HEK293 (cell line): ENCODE measurements at regions of chr7 and their contacts with region 1.

Region 1: DNA sequence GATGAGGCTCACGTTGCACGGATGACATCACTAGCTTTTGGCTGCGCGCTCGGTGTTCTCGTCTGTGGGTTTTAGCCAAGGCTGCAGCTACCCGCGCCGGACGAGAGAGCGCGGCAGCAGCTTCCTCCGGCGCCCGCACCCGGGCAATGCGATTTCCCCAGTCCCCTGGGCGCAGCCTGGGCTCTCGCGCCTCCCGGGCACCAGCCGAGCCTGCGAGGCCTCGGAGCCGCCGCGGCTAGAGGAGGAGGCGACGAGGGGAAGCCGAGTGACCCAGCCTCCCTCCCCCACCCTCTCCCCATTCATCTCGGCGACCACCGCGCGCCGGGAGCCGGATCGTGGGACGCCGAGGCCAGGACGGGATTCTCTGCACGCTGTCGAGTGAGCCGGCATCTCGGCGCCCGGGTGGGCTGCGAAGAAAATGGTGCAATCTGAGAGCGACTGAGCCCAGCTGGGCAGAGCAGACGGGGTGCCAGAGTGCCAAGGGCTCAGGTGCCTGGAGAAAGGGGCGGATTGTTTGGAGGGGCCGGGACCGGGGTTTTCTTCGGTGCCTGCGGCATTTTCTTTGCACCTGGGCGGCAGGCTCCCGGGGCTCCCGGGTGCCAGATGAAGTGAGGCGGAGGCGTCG is 1.2 kb upstream of the TMEM178B start:
- H3K4me3 ChIP-seq: peak overlapping the region; percentile 68
- H3K27ac ChIP-seq: peak overlapping the region; percentile 58; the same call in 1 of the 2 replicates
- H3K4me1 ChIP-seq: no peaks in the 10 kb centered on the region
- CTCF ChIP-seq: peak; percentile 32; the same call in 1 of the 2 replicates

Region 2: DNA sequence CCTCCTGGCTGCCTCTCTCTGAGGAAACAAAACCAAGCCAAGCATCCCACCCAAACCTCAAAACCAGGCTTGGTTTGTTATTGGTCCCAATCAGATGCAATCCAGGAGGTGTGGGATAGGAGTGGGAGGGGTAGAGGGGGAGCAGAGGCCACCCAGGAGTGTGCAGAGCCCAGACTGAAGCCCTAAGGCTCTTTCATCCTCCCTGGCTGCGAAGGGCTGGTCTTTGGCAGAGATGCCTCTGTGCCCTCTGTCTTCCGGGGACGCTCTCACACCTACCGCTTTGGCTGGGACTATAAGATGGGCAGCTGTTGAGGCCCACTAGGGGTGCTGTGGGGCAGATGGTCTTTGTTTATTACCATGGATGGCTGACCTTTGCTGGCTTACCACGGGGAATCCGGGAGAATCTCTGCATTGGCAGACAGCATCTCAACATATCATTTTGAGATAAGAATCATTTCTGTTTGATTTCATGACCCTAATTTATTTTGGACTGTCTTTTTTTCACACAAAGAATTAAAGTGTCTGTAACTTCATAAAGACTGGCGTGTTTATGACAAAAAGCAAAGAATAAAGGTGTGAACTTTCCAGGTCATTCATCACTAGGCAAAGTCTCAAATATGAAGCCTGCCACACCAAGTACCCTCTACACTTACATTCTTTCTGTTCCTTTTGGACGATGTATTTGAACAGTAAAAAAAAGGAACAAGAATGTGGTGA is 425.6 kb before region 1 on chr7:
- CTCF ChIA-PET with region 1: no interaction called
- POLR2A ChIA-PET with region 1: no interaction called
- H3K4me3 ChIP-seq: no peak overlapping the region
- H3K27ac ChIP-seq: no peak overlapping the region
- H3K4me1 ChIP-seq: no peaks in the 10 kb centered on the region
- CTCF ChIP-seq: peak; percentile 85

Region 3: GRCh38 chr7:140972876-140973859 is 99.5 kb before region 1 on chr7:
- CTCF ChIA-PET with region 1: no interaction called
- POLR2A ChIA-PET with region 1: no interaction called
- H3K4me3 ChIP-seq: no peak overlapping the region
- H3K27ac ChIP-seq: no peak overlapping the region
- H3K4me1 ChIP-seq: no peaks in the 10 kb centered on the region; the same call in 1 of the 2 replicates
- CTCF ChIP-seq: no peak

Region 4: GRCh38 chr7:141014524-141015395 is 57.9 kb before region 1 on chr7 and contains the start of gene MRPS33:
- CTCF ChIA-PET with region 1: interaction called, 8 read pairs
- POLR2A ChIA-PET with region 1: interaction called, 12 read pairs
- H3K4me3 ChIP-seq: peak within 1 kb of the TSS; percentile 89
- H3K27ac ChIP-seq: no peak within 1 kb of the TSS; the same call in 1 of the 2 replicates
- H3K4me1 ChIP-seq: no peaks in the 10 kb centered on the region; the same call in 1 of the 2 replicates
- CTCF ChIP-seq: peak; percentile 98

Region 5: GRCh38 chr7:141220263-141220880 is 147.7 kb after region 1 on chr7:
- CTCF ChIA-PET with region 1: interaction called, 10 read pairs
- POLR2A ChIA-PET with region 1: interaction called, 4 read pairs
- H3K4me3 ChIP-seq: no peak overlapping the region
- H3K27ac ChIP-seq: no peak overlapping the region
- H3K4me1 ChIP-seq: no peaks in the 10 kb centered on the region
- CTCF ChIP-seq: no peak

Region 6: GRCh38 chr7:141533149-141533949 is 460.7 kb after region 1 on chr7:
- CTCF ChIA-PET with region 1: interaction called, 13 read pairs
- POLR2A ChIA-PET with region 1: no interaction called
- H3K4me3 ChIP-seq: no peak overlapping the region
- H3K27ac ChIP-seq: no peak overlapping the region
- H3K4me1 ChIP-seq: no peaks in the 10 kb centered on the region
- CTCF ChIP-seq: peak; percentile 71